Panc1 (cell line): ENCODE measurements at regions of chr5 and their contacts with region 1.

Region 1: GRCh38 chr5:72108202-72109061 is 1.2 kb downstream of the MAP1B start:
- DNase-seq: no peak
- ATAC-seq: peak; percentile 80
- H3K4me3 ChIP-seq: peak overlapping the region; percentile 80 to 93
- H3K27ac ChIP-seq: peak overlapping the region; percentile 86
- H3K4me1 ChIP-seq: peaks cover 19% of the 10 kb centered on the region
- H3K27me3 ChIP-seq: no peaks in the 10 kb centered on the region; the same call in 1 of the 2 replicates
- CTCF ChIP-seq: no peak

Region 2: DNA sequence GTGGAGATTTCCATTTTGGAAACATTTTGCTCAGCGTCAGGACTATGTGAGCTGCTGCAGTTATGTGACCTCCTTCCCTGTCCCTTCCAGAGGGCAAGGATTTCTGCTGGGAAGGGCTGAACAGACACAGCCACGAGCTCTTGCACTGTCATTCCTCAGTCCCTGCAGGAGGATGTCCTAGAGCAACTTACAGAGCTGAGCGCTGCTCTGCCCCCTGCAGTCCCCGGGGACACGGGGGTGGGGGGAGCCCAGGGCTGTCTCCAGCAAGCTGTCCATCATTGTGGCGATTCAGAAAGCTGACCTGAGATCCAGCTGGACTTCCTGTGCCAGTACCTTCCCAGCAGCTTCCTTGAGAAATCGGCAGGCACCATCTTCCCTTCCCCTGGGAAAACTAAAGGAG is 29.1 kb before region 1 on chr5:
- CTCF ChIA-PET with region 1: interaction called, 10 read pairs
- POLR2A ChIA-PET with region 1: no interaction called
- in situ Hi-C with region 1: no loop called
- intact Hi-C with region 1: no loop called
- DNase-seq: no peak
- ATAC-seq: peak; percentile 38
- H3K4me3 ChIP-seq: no peak overlapping the region
- H3K27ac ChIP-seq: no peak overlapping the region
- H3K4me1 ChIP-seq: no peaks in the 10 kb centered on the region
- H3K27me3 ChIP-seq: peaks cover 15% of the 10 kb centered on the region
- CTCF ChIP-seq: 0 out of 2 replicates have a peak, but pooled peaks have one; percentile 15